ENCODE measurements at regions of chr10 and their contacts with region 1.

Region 1: GRCh38 chr10:35126530-35127296 is at the start of gene CREM:
- DNase-seq: peak; percentile 100
- ATAC-seq: peak; percentile 83
- H3K4me3 Mint-ChIP-seq: peak within 1 kb of the TSS; percentile 86
- H3K27ac Mint-ChIP-seq: peak within 1 kb of the TSS; percentile 99
- H3K4me1 Mint-ChIP-seq: peaks cover 57% of the 10 kb centered on the region
- H3K27me3 Mint-ChIP-seq: no peaks in the 10 kb centered on the region
- total RNA-seq, gene CREM: 106 to 126 TPM

Region 2: DNA sequence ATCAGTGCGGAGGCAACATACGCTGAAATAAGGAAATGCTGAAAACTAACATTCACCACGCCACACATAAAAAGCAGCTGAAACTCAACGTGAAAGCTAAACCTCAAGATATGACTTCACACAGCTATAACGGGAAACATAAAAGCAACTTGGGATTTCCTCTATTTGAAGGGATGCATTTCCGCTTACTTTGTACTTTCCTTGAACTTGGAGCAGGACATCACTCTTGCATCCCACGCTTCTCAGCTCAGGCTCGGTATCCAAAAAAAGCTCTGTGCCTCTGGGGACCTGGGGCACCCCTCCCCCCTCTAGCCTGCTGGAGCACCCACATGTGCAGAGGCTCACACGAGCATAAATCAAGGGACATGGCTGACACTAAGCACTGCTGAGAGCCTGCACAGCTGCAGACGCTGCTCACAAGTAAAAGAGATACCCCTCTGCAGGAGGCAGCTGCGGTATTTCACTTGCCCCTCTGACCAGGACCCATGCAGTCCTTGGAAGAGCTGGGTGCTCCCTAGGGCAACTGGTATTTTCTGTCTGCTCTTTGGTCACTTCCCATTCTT is 345.8 kb before region 1 on chr10:
- CTCF ChIA-PET with region 1: no interaction called
- POLR2A ChIA-PET with region 1: no interaction called
- intact Hi-C with region 1: no loop called
- DNase-seq: peak; percentile 36
- ATAC-seq: peak; percentile 61
- H3K4me3 Mint-ChIP-seq: peak overlapping the region; percentile 7
- H3K27ac Mint-ChIP-seq: no peak overlapping the region
- H3K4me1 Mint-ChIP-seq: peaks cover 6% of the 10 kb centered on the region
- H3K27me3 Mint-ChIP-seq: peaks cover 20% of the 10 kb centered on the region

Region 3: DNA sequence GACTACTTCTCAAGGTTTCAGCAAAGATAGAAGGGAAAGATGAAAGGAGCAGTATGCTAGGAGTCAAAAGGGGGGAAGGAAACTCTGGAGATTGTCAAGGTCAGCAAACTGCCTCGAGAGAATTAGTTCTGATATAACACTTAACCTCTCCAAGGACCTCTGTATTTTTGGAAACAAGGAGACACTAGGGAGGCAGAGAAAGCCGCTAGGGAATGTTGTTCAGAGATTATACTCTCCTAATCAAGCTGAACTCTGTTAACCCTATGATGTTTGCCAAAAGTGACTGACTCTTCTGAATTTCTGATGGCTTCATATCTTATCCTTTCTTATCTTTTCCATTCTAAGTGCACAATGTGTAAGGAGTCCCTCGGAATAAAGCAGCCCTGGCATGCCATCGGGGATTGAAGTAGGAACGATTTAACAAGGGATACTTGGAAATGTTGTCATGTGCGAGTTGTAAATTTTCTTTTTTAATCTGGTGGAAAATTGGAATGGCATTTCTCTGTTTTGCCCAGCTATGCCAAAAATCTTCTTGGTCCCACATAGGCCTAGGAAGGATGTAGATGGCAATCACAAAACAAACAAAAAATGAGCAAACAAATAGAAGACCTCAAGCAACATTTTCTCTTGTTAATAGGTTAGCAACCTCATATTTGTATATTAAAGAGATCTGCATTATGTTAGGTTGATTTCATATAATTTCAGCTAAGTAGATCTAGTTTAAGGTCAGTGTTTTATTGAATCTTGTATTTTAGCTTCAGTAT is 27.2 kb after region 1 on chr10:
- CTCF ChIA-PET with region 1: interaction called, 5 read pairs
- POLR2A ChIA-PET with region 1: interaction called, 17 read pairs
- intact Hi-C with region 1: loop called (anchors 1 kb)
- DNase-seq: no peak
- ATAC-seq: no peak
- H3K4me3 Mint-ChIP-seq: no peak overlapping the region
- H3K27ac Mint-ChIP-seq: peak overlapping the region; percentile 23
- H3K4me1 Mint-ChIP-seq: peaks cover 49% of the 10 kb centered on the region
- H3K27me3 Mint-ChIP-seq: no peaks in the 10 kb centered on the region

Region 4: DNA sequence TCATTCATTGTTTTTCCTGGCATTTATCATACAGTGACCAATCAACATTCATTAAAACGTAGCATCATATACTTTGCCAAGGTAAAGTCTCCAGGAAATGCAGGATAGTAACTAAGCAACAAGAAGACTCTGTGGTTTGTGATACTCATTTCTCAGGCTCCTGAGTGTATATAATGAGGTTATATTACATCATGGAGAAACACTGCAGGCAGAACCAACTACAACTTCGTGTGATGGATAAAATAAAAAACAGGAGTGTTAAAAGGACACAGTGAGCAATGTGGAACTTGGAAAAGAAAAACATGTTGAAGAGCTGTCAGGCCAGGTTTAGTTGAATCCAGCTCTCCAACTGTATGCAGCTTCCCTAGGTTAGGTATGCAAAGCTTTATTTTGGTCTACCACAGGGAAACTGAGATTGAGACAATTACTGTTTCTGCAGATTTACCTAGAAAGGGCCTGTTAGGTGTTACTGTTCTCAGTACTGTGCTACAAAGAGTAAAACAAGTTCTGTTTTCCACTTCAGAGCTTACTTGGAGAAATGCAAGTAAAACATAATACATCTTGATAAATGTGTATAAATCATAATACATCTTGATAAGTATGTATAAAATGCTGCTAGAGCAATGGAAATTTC is 201.8 kb after region 1 on chr10:
- CTCF ChIA-PET with region 1: no interaction called
- POLR2A ChIA-PET with region 1: no interaction called
- intact Hi-C with region 1: loop called in 1 of 2 experiments (anchors 2 kb)
- DNase-seq: no peak
- ATAC-seq: peak; percentile 82
- H3K4me3 Mint-ChIP-seq: no peak overlapping the region
- H3K27ac Mint-ChIP-seq: peak overlapping the region; percentile 28
- H3K4me1 Mint-ChIP-seq: peaks cover 54% of the 10 kb centered on the region
- H3K27me3 Mint-ChIP-seq: no peaks in the 10 kb centered on the region

Region 5: DNA sequence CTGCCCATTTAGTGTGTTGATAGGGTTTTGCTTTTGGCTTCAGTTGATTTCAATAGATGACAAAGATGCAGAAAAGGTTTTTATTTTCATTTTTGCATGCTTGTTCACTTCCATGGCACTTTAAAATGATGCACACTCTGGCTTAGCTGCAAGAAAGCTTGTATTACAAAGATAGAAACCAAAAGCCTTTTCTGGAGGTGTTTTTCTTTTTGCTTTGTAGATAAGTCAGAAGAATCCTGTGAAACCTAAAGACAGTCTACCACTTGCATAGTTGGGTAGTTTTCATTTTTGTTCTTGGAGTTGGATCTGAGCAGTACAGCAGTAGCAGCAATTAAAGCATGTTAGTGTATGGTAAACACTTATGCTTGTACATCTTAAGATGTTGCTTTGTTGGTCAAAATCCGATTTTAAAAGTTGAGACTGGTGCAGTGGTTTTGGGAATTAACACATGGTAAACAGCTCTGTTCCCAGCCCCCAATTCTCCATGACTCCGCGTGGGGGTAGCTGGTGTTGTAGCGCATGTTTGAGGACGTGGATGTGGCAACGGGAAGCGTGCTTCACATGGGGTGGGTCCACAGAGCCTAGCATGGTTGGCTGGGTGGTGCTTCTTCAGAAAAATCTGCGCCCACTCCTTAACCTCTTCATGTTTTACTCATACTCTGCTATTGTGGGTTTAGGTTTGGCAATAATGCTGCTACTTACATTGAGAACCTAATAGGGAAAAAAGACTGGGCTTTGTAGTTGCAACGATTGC is 229.4 kb after region 1 on chr10:
- CTCF ChIA-PET with region 1: interaction called, 3 read pairs
- POLR2A ChIA-PET with region 1: no interaction called
- intact Hi-C with region 1: loop called in 1 of 2 experiments (anchors 1 kb)
- DNase-seq: peak; percentile 67
- ATAC-seq: peak; percentile 76
- H3K4me3 Mint-ChIP-seq: peak overlapping the region; percentile 71
- H3K27ac Mint-ChIP-seq: peak overlapping the region; percentile 94
- H3K4me1 Mint-ChIP-seq: peaks cover 78% of the 10 kb centered on the region
- H3K27me3 Mint-ChIP-seq: no peaks in the 10 kb centered on the region

Region 6: GRCh38 chr10:35447693-35448407 is 321.1 kb after region 1 on chr10:
- CTCF ChIA-PET with region 1: no interaction called
- POLR2A ChIA-PET with region 1: no interaction called
- intact Hi-C with region 1: loop called (anchors 2 to 10 kb)
- DNase-seq: peak; percentile 33
- ATAC-seq: peak; percentile 23
- H3K4me3 Mint-ChIP-seq: peak overlapping the region; percentile 37
- H3K27ac Mint-ChIP-seq: peak overlapping the region; percentile 90
- H3K4me1 Mint-ChIP-seq: peaks cover 79% of the 10 kb centered on the region
- H3K27me3 Mint-ChIP-seq: no peaks in the 10 kb centered on the region

Region 7: GRCh38 chr10:35642027-35642792 is 515.5 kb after region 1 on chr10 and contains the start of gene FZD8:
- CTCF ChIA-PET with region 1: interaction called, 3 read pairs
- POLR2A ChIA-PET with region 1: no interaction called
- intact Hi-C with region 1: loop called (anchors 1 to 5 kb)
- DNase-seq: peak; percentile 85
- ATAC-seq: peak; percentile 90
- H3K4me3 Mint-ChIP-seq: peak within 1 kb of the TSS; percentile 71
- H3K27ac Mint-ChIP-seq: no peak within 1 kb of the TSS
- H3K4me1 Mint-ChIP-seq: peaks cover 20% of the 10 kb centered on the region
- H3K27me3 Mint-ChIP-seq: peaks cover 43% of the 10 kb centered on the region
- total RNA-seq, gene FZD8: 0.16 to 0.18 TPM

Measured in activated CD4-positive, alpha-beta T cell treated with anti-CD3 and anti-CD28 coated beads for 36 hours (primary cell).